ENCODE measurements at regions of chr7 and their contacts with region 1.

Region 1: GRCh38 chr7:158695726-158696452 is 8.7 kb downstream of the NCAPG2 start:
- DNase-seq: peak; percentile 79

Region 2: DNA sequence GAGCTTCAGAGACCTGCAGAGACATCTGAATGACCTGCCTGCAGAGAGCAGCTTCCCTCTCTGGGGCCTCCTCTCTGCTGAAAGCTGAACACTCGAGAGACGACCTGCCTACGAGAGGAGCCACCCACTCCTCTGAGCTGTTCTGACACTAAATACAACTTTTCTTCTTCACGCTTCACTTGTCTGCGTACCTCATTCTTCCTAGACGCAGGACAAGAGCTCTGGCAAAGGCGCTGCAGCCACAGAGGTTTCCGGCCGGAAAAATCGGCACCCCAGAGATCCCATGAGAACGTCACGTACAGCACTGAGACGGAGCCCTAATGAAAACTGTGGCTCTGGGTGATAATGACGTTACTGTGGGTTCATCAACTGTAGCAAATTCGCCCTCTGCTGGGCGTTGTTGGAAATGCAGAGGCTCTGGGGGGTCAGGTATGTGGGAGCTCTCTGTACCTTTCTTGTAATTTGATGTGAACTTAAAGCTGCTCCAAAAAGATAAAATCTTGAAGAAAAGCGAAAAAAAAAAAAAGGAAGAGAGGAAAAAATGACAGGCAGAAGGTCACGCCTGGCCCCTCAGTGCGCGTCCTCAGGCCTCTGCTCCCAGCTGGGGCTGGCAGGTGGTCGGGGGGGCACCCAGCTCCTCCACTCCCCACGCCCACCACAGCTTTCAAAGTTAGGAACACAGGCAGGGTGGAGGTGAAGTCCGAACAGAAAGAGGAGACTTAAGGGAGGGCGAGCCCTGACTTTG is 281.1 kb after region 1 on chr7:
- intact Hi-C with region 1: loop called in 1 of 2 experiments (anchors 5 kb)
- DNase-seq: peak; percentile 95